ENCODE measurements at regions of chr2 and their contacts with region 1.

Region 1: DNA sequence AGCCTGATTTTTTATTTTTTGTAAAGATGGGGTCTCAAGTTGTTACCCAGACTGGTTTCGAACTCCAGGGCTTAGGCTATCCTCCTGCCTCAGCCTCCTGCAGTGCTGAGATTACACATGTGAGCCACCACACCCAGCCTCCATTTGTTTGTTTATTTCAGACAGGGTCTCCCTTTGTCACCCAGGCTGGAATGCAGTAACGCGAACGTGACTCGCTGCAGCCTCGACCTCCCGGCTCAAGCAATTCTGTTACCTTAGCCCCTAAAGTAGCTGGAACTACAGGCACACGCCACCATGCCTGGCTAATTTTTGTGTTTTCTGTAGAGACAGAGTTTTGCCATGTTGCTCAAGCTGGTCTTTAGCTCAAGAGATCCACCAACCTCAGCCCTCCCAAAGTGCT is 27.2 kb downstream of the UBXN4 start:
- DNase-seq: no peak
- ATAC-seq: no peak

Region 2: DNA sequence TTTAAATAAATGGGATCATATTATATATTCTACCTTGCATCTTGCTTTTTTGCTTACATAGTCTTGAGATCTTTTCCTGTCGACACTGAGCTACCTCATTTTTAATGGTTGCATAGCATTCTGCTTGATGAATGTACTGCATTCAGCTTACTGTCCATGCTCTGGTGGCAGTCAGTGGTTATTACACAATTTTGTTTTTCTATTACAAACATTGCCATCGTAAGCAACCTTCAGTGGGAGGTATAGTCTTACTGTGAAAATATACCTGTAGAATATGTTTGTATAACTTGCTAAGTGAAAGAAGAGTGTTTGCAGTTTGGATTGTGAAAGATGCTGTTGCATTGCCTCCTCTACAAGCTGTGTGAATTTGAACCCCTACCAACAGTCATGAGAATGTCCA is 16.2 kb after region 1 on chr2:
- intact Hi-C with region 1: loop called (anchors 1 kb)
- DNase-seq: no peak
- ATAC-seq: no peak